ENCODE measurements at regions of chr19 and their contacts with region 1.

Region 1: DNA sequence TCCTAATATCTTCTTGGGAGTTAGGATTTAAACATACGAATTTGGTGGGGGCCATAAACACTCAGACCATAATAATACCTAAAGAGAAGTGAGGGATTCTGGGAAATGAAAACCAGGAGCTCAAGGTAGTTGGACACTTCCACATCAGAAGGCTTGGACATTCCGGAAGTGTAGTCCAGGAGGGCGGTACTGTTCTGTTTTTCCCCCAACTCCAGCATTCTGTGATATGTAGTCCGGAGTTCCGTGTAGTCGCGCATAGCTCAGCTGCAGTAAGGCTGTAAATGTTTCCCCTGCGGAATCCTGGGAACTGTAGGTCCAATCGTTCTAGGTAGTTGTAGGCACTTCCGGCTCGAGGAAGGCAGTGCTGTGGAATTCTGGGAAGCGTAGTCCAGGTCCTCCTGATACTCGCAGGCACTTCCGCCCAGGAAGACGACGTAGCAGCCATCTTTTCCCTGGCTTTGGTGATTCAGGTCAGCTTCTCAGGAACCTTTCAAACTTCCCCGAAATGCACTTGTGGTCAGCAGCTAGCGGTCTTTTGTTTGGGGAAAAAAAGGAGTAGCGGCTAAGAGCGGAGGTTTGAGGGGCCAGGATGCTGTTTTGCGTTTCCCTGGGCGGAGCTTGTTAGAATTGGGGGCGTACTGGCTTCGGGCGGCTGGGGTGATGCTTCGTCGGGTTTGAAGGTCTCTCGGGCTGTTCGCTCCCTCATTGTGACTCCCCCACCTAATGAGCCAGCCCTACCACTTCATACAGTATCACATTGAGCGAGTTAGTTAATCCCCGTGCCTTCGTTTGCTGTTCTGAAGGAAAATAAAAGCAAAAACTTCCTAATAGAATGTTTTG is at the start of gene ZNF226:
- DNase-seq: peak; percentile 91 to 93
- H3K4me3 ChIP-seq: peak within 1 kb of the TSS; percentile 44 to 98 (median 69)
- H3K27ac ChIP-seq: peak within 1 kb of the TSS; percentile 66 to 83 (median 79)
- H3K4me1 ChIP-seq: peaks cover 8 to 11% of the 10 kb centered on the region in 2 donors
- H3K27me3 ChIP-seq: no peaks in the 10 kb centered on the region
- CTCF ChIP-seq: no peak
- POLR2A ChIP-seq: peak in 1 of 2 donors; percentile 53
- total RNA-seq, gene ZNF226: 19.3 to 50.0 (median 37.8) TPM

Region 2: DNA sequence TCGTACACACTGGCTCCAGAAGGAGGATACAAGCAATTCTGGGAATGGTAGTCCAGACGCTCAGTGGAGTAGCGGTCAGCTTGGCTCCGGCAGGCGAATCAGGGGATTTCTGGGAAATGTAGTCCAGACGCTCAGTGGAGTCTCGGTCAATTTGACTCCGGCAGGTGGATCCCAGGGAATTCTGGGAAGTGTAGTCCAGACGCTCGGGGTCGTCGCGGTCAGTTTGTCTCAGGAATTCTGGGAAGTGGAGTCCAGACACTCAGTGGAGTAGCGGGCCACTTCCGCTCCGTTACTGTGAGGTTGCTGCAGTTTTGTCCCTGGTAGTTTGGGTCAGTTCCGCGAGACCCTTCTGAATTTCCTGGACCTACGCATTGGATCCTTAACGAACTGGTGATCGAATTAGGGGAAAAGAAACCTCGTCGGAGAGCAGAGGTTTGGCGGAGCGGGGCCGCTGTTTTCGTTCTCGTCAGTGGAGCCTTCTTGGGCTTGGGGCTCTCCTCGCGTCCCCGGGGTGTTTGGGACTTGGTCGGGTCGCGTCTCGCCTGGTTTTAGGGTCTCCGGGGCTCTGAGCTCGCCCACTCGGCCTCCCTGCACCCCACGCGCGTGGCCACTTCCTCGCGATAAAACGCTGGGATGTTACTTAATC is 51.6 kb before region 1 on chr19 and contains the start of gene ZNF225:
- intact Hi-C with region 1: loop called (anchors 10 kb)
- DNase-seq: peak; percentile 96
- H3K4me3 ChIP-seq: peak within 1 kb of the TSS; percentile 36 to 55 (median 50)
- H3K27ac ChIP-seq: peak within 1 kb of the TSS; percentile 34 to 54 (median 40)
- H3K4me1 ChIP-seq: peaks cover 13 to 18% of the 10 kb centered on the region in 2 donors
- H3K27me3 ChIP-seq: no peaks in the 10 kb centered on the region
- CTCF ChIP-seq: peak in 1 of 6 experiments; percentile 23
- POLR2A ChIP-seq: peak in 1 of 2 donors; percentile 45
- total RNA-seq, gene ZNF225: 4.0 to 8.3 (median 6.3) TPM

Region 3: GRCh38 chr19:44260363-44261070 is 95.6 kb after region 1 on chr19:
- intact Hi-C with region 1: no loop called
- DNase-seq: no peak
- H3K4me3 ChIP-seq: no peak overlapping the region
- H3K27ac ChIP-seq: no peak overlapping the region
- H3K4me1 ChIP-seq: no peaks in the 10 kb centered on the region
- H3K27me3 ChIP-seq: no peaks in the 10 kb centered on the region
- CTCF ChIP-seq: no peak
- POLR2A ChIP-seq: no peak

Measured in thyroid gland (tissue), 4 donors.